ENCODE measurements at regions of chr13 and their contacts with region 1.

Region 1: GRCh38 chr13:67224148-67224846 is 5.8 kb downstream of the PCDH9 start:
- ATAC-seq: peak; percentile 40 to 82 (median 78)
- H3K4me3 ChIP-seq: peak overlapping the region; percentile 25 to 81 (median 32)
- H3K27ac ChIP-seq: no peak overlapping the region
- H3K4me1 ChIP-seq: peaks cover 4 to 26% of the 10 kb centered on the region in 2 donors

Region 2: DNA sequence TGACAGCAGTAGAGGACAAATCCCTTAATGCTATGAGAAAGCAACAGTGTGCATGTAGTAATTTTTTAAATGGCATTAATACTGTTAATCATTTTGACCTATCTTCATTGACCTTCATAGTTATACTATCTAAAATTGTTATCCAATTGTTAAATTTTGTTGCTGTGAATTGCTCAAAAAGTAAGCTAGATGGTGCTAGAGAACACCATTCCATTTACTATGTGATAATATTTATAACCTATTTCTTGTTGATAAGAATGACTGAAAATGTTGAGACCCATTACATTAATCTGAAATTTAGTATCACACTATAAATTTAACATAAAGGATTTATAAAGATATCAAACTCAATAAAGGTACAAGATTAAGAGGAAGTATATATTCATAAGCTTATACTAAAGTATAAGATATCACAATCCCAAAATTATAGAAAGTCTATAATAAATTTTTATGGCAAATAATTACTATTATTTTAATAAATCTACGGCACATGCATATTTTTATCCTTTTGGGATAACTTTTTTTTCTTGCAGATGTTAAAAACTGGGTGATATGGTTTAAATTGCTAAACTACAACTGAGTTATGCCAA is 1567.5 kb before region 1 on chr13:
- in situ Hi-C with region 1: loop called in 2 of 9 experiments (anchors 25 kb)
- ATAC-seq: no peak
- H3K4me3 ChIP-seq: no peak overlapping the region
- H3K27ac ChIP-seq: no peak overlapping the region
- H3K4me1 ChIP-seq: peaks cover 3 to 7% of the 10 kb centered on the region in 2 donors

Region 3: DNA sequence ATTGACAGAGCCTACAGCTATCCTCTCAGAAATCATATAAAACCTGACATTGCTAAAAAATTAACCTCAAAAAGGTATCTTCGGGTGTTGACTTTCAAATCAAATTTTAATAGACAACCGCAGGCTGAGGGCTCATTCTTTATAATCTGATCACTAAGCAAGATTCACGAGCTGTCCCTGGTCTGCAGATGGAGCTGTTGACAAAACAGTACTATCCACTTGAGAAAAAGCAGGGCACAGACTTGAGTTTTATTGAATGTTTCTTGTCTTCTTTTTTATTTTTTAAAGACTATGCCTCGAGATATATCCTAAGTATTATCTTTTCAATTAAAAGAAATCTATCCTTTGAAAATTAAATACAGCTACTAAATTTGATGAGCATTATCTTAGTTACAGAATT is 534.7 kb before region 1 on chr13:
- in situ Hi-C with region 1: loop called in 1 of 9 experiments (anchors 25 kb)
- ATAC-seq: peak in 4 of 8 experiments; percentile 37 to 60 (median 52)
- H3K4me3 ChIP-seq: no peak overlapping the region
- H3K27ac ChIP-seq: no peak overlapping the region
- H3K4me1 ChIP-seq: peaks cover 0 to 3% of the 10 kb centered on the region in 2 donors

Region 4: GRCh38 chr13:67075239-67075638 is 149.1 kb before region 1 on chr13:
- in situ Hi-C with region 1: loop called in 1 of 9 experiments (anchors 25 kb)
- ATAC-seq: peak in 1 of 8 experiments; percentile 16
- H3K4me3 ChIP-seq: no peak overlapping the region
- H3K27ac ChIP-seq: no peak overlapping the region
- H3K4me1 ChIP-seq: no peaks in the 10 kb centered on the region

Region 5: DNA sequence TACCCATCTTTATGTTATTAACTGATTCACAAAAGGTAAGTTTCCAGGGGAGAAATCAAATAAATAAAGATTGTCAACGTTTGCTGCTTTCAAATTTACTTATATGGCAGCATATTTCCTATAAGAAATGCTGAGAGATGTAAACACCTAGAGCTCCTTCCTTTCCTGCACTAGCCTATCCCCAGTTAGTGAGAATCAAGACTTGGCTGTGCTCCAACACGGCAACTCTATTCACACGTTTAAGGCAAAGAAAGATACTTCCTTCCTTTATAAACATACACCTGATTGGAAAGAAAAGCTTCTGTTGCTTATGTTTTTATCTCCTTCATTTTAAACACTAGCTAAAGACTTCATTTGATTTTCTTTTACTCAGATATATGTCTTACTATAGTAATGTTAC is 101.1 kb before region 1 on chr13:
- in situ Hi-C with region 1: no loop called
- ATAC-seq: no peak
- H3K4me3 ChIP-seq: no peak overlapping the region
- H3K27ac ChIP-seq: no peak overlapping the region
- H3K4me1 ChIP-seq: peaks cover 2 to 22% of the 10 kb centered on the region in 2 donors

Measured in motor neuron (in vitro differentiated cells).